WTC11 (cell line): ENCODE measurements at regions of chr3 and their contacts with region 1.

Region 1: DNA sequence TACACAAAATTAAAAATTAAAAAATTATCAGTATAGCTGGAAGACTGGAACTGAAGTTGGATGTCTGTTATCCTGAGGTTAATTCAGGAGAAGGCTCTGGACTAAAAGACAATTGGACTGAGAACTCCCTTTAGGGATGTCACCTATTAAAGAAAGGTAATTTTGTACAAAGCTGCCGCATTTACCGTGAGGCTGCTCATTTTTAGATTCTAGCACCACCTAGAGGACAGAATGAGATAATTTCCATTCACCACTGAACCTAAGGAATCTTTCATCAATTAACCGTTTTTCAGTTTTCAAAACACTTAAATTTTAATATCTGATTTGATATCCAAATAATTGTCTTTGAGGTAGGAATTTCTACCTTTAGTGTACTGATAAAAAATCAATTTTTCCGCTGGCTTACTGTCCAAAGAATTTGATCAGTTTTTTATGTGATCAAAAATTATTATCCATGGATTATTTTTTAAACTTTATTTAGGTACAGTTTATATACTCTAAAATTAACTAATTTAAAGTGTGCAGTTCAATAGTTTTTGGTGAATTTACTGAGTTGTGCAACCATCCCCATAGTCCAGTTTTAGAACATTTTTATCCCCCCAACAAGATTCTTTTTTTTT is 106.7 kb upstream of the TNIK start:
- DNase-seq: no peak
- ATAC-seq: peak; percentile 68
- H3K4me3 Mint-ChIP-seq: no peak overlapping the region
- H3K27ac Mint-ChIP-seq: no peak overlapping the region
- H3K4me1 Mint-ChIP-seq: peaks cover 13% of the 10 kb centered on the region
- H3K27me3 Mint-ChIP-seq: no peaks in the 10 kb centered on the region
- CTCF ChIP-seq: peak; percentile 80

Region 2: GRCh38 chr3:171113714-171114113 is 453.2 kb before region 1 on chr3:
- CTCF ChIA-PET with region 1: interaction called, 11 read pairs
- POLR2A ChIA-PET with region 1: no interaction called
- DNase-seq: peak; percentile 45
- ATAC-seq: peak; percentile 97
- H3K4me3 Mint-ChIP-seq: no peak overlapping the region
- H3K27ac Mint-ChIP-seq: no peak overlapping the region
- H3K4me1 Mint-ChIP-seq: peaks cover 14% of the 10 kb centered on the region
- H3K27me3 Mint-ChIP-seq: peaks cover 9% of the 10 kb centered on the region
- CTCF ChIP-seq: no peak

Region 3: DNA sequence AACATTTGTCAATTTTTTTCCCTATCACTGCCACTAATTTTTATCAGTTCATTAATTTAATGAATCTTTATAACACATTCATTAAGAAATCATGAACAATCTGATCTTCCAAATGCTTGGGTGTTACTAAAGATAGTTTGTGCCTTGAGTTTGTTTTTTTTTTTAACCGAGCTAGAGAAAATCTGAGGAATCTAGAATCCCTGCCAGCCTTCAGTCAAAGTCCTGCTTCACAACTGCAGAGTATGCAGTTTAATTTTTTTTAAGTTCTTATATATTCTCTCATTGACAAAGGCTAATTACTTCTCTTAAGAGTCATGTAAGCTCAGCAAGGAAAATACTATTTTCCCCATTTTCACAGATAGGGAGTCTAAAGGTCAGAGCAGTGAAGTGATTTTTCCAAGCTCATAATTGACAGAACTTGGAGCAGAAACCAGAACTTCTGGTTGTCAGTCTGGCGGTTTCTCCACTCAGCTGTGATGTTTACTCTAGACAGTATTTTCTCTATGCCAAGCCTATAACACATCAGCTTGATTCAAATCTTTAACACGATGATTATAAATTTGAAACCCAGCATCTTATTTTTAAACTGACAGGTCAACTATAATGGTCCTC is 162.4 kb before region 1 on chr3:
- CTCF ChIA-PET with region 1: no interaction called
- POLR2A ChIA-PET with region 1: no interaction called
- DNase-seq: no peak
- ATAC-seq: no peak
- H3K4me3 Mint-ChIP-seq: no peak overlapping the region
- H3K27ac Mint-ChIP-seq: no peak overlapping the region
- H3K4me1 Mint-ChIP-seq: peaks cover 46% of the 10 kb centered on the region
- H3K27me3 Mint-ChIP-seq: no peaks in the 10 kb centered on the region
- CTCF ChIP-seq: no peak

Region 4: DNA sequence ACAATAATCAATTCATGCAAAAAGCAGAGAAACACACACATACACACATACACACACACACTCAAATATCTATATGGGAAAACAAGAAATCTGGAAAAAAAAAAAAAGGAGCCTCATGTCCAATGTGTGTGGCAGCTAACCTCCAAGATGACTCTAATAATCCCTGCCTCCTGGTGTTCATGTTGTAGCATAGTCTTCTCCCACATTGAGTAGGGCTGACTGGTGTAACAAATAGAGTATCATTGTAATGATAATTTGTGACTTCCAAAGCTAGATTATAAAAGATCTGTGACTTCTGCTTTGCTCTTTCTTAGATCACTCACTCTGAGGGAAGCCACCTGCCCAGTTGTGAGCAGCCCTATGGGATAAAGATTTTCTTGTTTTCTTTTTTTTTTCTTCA is 24.1 kb after region 1 on chr3:
- CTCF ChIA-PET with region 1: no interaction called
- POLR2A ChIA-PET with region 1: no interaction called
- DNase-seq: no peak
- ATAC-seq: peak; percentile 52
- H3K4me3 Mint-ChIP-seq: no peak overlapping the region
- H3K27ac Mint-ChIP-seq: no peak overlapping the region
- H3K4me1 Mint-ChIP-seq: peaks cover 16% of the 10 kb centered on the region
- H3K27me3 Mint-ChIP-seq: no peaks in the 10 kb centered on the region
- CTCF ChIP-seq: no peak